CD14-positive monocyte (primary cell): ENCODE measurements at regions of chr12 and their contacts with region 1.

Region 1: DNA sequence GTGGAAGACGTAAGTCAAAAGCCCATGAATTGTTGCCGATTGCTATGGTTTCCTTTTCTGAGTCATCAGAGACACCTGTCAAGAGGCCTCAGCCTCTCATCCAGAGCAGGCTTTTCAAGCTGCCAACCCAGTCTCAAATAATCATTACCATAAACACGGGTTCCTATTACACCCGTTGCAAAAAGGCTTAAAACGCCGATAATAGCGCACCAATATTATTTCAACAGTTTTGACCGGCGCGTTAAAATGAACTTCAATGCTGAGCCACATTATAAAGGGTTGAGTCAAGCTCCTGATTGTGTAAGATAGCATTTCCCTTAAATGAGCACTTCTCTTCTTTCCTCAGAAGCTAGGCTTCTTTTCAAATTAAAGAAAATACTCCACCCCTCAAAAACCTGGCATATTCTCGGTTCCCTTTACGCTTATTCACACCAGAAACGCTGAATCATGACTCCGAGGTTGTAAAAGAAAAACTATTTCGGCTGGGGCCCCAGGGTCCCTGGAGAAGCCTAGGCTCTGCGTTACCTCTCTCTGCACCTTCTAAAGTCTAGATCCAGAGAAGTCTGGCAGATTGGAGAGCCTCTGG is 1.4 kb downstream of the TMTC1 start:
- DNase-seq: peak; percentile 48 to 88 (median 81)
- H3K4me3 ChIP-seq: peak overlapping the region; percentile 61 to 86 (median 84)
- H3K4me3 Mint-ChIP-seq: peak overlapping the region; percentile 87 to 95
- H3K27ac ChIP-seq: peak overlapping the region; percentile 64 to 92
- H3K27ac Mint-ChIP-seq: peak overlapping the region; percentile 24 to 95 (median 89)
- H3K4me1 ChIP-seq: peaks cover 20 to 26% of the 10 kb centered on the region in 2 donors
- H3K4me1 Mint-ChIP-seq: peaks cover 35% of the 10 kb centered on the region
- H3K27me3 ChIP-seq: peaks cover 25 to 32% of the 10 kb centered on the region in 2 donors
- H3K27me3 Mint-ChIP-seq: peaks cover 24 to 50% (median 34%) of the 10 kb centered on the region in 3 donors
- CTCF ChIP-seq: no peak

Region 2: DNA sequence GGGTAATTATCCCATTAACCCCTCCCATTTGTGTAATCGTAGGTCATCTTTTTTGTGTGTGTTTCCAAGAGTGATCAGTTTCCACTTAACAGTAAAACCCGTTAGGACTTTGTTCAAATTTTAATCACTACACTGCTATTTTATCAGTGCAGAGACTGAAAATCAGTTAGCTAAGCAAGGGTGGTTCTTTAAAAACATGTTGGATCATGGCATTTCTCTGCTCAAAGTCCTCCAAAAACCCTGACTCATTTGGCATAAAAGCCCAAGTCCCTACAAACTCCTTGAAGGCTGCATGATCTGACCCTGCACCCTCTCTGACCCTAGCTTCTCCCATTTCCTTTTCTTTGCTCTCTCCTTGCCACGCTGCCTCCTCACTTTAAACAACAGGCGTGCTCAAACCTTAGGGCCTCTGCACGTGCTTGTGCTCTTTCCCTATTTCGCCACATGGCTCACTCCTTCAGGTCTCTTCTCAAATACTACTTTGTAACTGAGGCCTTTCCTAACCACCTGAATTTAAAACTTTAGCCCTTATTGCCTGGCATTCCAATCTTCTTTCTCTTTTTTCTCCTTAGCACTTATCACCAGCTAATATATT is 271.7 kb before region 1 on chr12:
- intact Hi-C with region 1: no loop called
- DNase-seq: no peak
- H3K4me3 ChIP-seq: no peak overlapping the region
- H3K4me3 Mint-ChIP-seq: peak overlapping the region in 1 of 2 donors; percentile 52
- H3K27ac ChIP-seq: no peak overlapping the region
- H3K27ac Mint-ChIP-seq: peak overlapping the region in 1 of 7 donors; percentile 5
- H3K4me1 ChIP-seq: no peaks in the 10 kb centered on the region
- H3K4me1 Mint-ChIP-seq: no peaks in the 10 kb centered on the region
- H3K27me3 ChIP-seq: peaks cover 2 to 4% of the 10 kb centered on the region in 2 donors
- H3K27me3 Mint-ChIP-seq: peaks cover 2 to 10% (median 2%) of the 10 kb centered on the region in 3 donors
- CTCF ChIP-seq: no peak

Region 3: GRCh38 chr12:29682088-29682487 is 100.3 kb before region 1 on chr12:
- intact Hi-C with region 1: loop called in 1 of 2 experiments (anchors 10 kb)
- DNase-seq: no peak
- H3K4me3 ChIP-seq: no peak overlapping the region
- H3K4me3 Mint-ChIP-seq: no peak overlapping the region
- H3K27ac ChIP-seq: no peak overlapping the region
- H3K27ac Mint-ChIP-seq: no peak overlapping the region
- H3K4me1 ChIP-seq: no peaks in the 10 kb centered on the region
- H3K4me1 Mint-ChIP-seq: peaks cover 10% of the 10 kb centered on the region
- H3K27me3 ChIP-seq: peaks cover 0 to 18% of the 10 kb centered on the region in 2 donors
- H3K27me3 Mint-ChIP-seq: peaks cover 8 to 16% (median 15%) of the 10 kb centered on the region in 3 donors
- CTCF ChIP-seq: no peak

Region 4: DNA sequence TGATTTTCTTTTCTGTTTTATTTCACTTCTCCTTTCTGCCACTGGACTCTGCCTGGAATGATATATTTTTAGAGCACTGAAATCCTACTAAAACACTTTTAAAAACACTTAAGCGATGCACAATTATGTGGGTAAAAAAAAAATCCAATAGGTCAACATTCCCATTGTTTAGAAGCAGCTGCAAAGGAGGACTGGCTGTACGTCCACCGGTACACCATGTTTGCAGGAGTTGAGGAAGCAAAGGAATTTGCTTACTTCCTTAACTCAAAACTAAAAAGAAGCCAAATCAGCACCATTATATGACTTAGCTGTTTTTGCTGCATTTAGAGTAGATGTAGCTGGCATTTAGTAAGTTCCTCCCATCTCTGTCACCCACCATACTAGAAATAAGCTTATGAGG is 188.1 kb after region 1 on chr12:
- intact Hi-C with region 1: no loop called
- DNase-seq: no peak
- H3K4me3 ChIP-seq: no peak overlapping the region
- H3K4me3 Mint-ChIP-seq: no peak overlapping the region
- H3K27ac ChIP-seq: no peak overlapping the region
- H3K27ac Mint-ChIP-seq: peak overlapping the region in 1 of 7 donors; percentile 23
- H3K4me1 ChIP-seq: no peaks in the 10 kb centered on the region
- H3K4me1 Mint-ChIP-seq: no peaks in the 10 kb centered on the region
- H3K27me3 ChIP-seq: no peaks in the 10 kb centered on the region
- H3K27me3 Mint-ChIP-seq: peaks cover 0 to 2% (median 0%) of the 10 kb centered on the region in 3 donors
- CTCF ChIP-seq: no peak